IMR-90 (cell line): ENCODE measurements at regions of chr7 and their contacts with region 1.

Region 1: DNA sequence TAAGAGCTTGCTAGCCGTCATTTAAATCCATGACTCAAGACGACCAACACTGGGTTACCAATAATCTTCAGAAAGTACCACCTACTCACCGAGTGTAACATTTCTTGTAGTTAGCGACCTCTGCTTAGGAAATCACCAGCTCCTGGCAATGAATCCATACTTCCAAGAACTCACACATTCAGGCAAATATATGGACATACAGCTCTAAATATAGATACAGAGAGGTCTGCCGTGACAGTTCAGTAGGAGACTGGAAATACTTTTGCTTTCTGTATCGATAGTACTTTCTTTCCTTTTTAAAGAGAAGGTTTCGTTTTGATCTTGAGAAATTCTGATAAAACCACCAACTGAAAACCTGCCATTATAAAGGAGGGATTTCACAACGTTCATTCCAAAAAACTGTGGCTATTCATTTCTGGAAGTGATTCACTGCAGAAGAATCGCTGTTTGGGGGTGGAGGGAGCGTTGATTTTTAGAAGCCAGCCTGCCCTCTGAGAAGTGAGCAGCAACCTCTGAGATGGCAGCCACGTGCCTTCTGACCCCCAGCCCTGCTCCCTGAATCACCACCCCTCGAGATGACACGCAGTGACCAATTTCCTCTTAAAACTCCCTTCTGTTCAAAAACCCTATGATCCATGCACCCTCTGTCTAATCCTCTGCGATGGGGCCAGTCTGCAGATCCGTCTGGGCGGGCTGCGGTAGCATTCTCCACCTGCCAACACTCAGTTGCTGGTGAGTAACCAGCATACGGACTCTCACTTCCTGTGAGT is 179.0 kb upstream of the KLF14 start:
- DNase-seq: peak; percentile 99
- ATAC-seq: peak; percentile 57
- H3K4me3 ChIP-seq: peak overlapping the region; percentile 87
- H3K27ac ChIP-seq: peak overlapping the region; percentile 92
- H3K4me1 ChIP-seq: peaks cover 30% of the 10 kb centered on the region
- H3K27me3 ChIP-seq: no peaks in the 10 kb centered on the region
- CTCF ChIP-seq: no peak
- POLR2A ChIP-seq: peak; percentile 80
- RAD21 ChIP-seq: peak; percentile 15; the same call in 1 of the 2 replicates

Region 2: DNA sequence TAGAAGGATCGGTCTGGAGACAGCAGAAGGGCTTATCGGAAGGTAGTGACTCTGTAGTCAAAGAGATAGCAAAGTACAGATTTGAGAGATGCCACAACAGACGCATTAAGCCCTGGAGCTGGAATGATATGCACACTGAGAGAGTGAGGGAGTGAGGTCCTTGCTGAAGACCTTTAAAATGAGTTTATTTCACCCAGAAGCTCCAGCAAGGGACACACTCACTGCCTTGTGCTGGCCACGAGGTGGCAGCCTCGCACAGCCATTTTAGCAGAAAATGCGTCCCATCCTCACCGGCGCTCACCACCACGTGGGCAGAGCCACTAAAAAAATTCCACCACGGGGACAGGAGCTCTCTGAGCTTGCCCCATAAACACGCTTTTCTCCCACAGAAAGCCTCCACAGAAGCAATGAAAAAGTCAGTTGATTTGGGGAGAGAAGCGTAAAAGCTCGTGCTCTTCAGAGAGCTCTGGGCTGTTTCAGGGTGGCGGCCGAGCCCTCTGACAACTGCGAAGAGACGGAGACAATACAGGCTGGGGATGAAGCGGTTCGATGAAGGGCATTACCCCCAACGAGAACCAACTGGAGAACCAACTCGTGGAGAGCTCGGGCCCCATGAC is 16.0 kb before region 1 on chr7:
- CTCF ChIA-PET with region 1: interaction called, 17 read pairs
- POLR2A ChIA-PET with region 1: interaction called, 3 read pairs
- dilution Hi-C with region 1: no loop called
- in situ Hi-C with region 1: no loop called
- intact Hi-C with region 1: no loop called
- DNase-seq: peak; percentile 84
- ATAC-seq: peak; percentile 24
- H3K4me3 ChIP-seq: no peak overlapping the region
- H3K27ac ChIP-seq: peak overlapping the region; percentile 71
- H3K4me1 ChIP-seq: peaks cover 52% of the 10 kb centered on the region
- H3K27me3 ChIP-seq: no peaks in the 10 kb centered on the region
- CTCF ChIP-seq: peak; percentile 80
- POLR2A ChIP-seq: no peak
- RAD21 ChIP-seq: peak; percentile 83

Region 3: GRCh38 chr7:130943336-130943901 is 30.4 kb after region 1 on chr7:
- CTCF ChIA-PET with region 1: interaction called, 3 read pairs
- POLR2A ChIA-PET with region 1: interaction called, 9 read pairs
- dilution Hi-C with region 1: no loop called
- in situ Hi-C with region 1: no loop called
- intact Hi-C with region 1: loop called (anchors 1 kb)
- DNase-seq: peak; percentile 97
- ATAC-seq: peak; percentile 52
- H3K4me3 ChIP-seq: peak overlapping the region; percentile 45; the same call in 1 of the 2 replicates
- H3K27ac ChIP-seq: peak overlapping the region; percentile 91
- H3K4me1 ChIP-seq: peaks cover 14% of the 10 kb centered on the region
- H3K27me3 ChIP-seq: no peaks in the 10 kb centered on the region
- CTCF ChIP-seq: no peak
- POLR2A ChIP-seq: no peak
- RAD21 ChIP-seq: no peak

Region 4: DNA sequence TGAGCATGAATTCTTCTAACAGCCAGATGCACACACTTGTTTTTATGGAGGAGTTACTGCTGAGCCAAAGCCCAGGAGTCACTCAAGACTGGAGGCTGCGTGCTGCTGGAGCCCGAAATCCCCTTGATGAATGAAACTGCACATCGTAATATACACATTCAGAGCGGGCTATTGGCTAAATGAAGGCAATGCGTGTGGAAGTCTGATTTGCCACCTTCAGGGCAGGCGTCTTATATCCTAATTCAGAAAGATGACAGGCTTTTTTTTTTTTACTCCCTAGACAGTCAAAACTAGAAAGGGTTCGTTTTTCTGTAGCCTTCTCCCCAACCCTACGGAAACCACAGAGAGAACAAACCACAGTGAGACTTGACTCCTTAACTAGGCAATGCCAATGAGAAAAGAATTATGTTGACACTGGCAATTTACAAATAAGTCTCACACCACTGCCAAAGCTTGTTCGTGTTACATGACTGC is 48.1 kb after region 1 on chr7:
- CTCF ChIA-PET with region 1: no interaction called
- POLR2A ChIA-PET with region 1: interaction called, 23 read pairs
- dilution Hi-C with region 1: no loop called
- in situ Hi-C with region 1: no loop called
- intact Hi-C with region 1: loop called (anchors 1 kb)
- DNase-seq: peak; percentile 77
- ATAC-seq: peak; percentile 8
- H3K4me3 ChIP-seq: peak overlapping the region; percentile 30; the same call in 1 of the 2 replicates
- H3K27ac ChIP-seq: peak overlapping the region; percentile 91
- H3K4me1 ChIP-seq: peaks cover 25% of the 10 kb centered on the region
- H3K27me3 ChIP-seq: no peaks in the 10 kb centered on the region
- CTCF ChIP-seq: no peak
- POLR2A ChIP-seq: no peak
- RAD21 ChIP-seq: no peak

Region 5: GRCh38 chr7:131007394-131008330 is 94.6 kb after region 1 on chr7:
- CTCF ChIA-PET with region 1: no interaction called
- POLR2A ChIA-PET with region 1: interaction called, 3 read pairs
- dilution Hi-C with region 1: no loop called
- in situ Hi-C with region 1: no loop called
- intact Hi-C with region 1: loop called (anchors 2 kb)
- DNase-seq: peak; percentile 79
- ATAC-seq: peak; percentile 56
- H3K4me3 ChIP-seq: no peak overlapping the region
- H3K27ac ChIP-seq: peak overlapping the region; percentile 80
- H3K4me1 ChIP-seq: peaks cover 31% of the 10 kb centered on the region
- H3K27me3 ChIP-seq: no peaks in the 10 kb centered on the region
- CTCF ChIP-seq: peak; percentile 74
- POLR2A ChIP-seq: no peak
- RAD21 ChIP-seq: peak; percentile 72

Region 6: GRCh38 chr7:131040467-131040932 is 127.5 kb after region 1 on chr7:
- CTCF ChIA-PET with region 1: no interaction called
- POLR2A ChIA-PET with region 1: no interaction called
- dilution Hi-C with region 1: no loop called
- in situ Hi-C with region 1: no loop called
- intact Hi-C with region 1: loop called (anchors 5 kb)
- DNase-seq: peak; percentile 77
- ATAC-seq: peak; percentile 85
- H3K4me3 ChIP-seq: no peak overlapping the region
- H3K27ac ChIP-seq: no peak overlapping the region
- H3K4me1 ChIP-seq: peaks cover 11% of the 10 kb centered on the region
- H3K27me3 ChIP-seq: no peaks in the 10 kb centered on the region
- CTCF ChIP-seq: peak; percentile 88
- POLR2A ChIP-seq: no peak
- RAD21 ChIP-seq: peak; percentile 91

Region 7: DNA sequence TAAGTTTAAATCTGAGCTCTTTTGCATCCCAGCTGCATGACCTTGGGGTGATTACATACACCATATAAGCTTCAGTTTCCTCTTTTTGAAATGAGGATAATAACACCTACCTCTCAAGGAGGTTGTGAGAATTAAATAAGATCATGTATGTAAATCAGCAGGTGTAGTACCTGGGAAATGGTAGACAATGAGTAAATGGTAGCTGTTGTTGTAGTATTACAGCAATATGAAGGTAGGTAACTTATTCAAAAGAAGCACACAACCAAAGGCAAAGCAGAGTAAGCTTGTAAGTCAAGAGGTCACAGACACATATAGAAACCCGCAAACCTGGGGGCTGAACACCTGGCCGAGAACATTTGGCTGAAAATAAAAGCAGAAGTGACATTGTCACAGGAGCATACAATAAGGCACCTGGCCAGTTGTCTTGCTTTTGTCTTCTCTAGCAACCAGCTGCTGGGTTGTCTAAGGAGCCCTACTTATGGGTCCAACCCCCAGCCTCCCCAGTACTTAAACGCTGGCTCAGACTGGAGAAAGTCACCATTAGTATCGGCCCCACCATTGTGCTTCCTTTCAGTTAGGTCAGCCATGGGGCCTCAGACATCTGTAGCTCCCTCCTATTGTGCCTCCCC is 211.1 kb after region 1 on chr7:
- CTCF ChIA-PET with region 1: no interaction called
- POLR2A ChIA-PET with region 1: no interaction called
- dilution Hi-C with region 1: no loop called
- in situ Hi-C with region 1: no loop called
- intact Hi-C with region 1: no loop called
- DNase-seq: no peak
- ATAC-seq: no peak
- H3K4me3 ChIP-seq: no peak overlapping the region
- H3K27ac ChIP-seq: no peak overlapping the region
- H3K4me1 ChIP-seq: no peaks in the 10 kb centered on the region
- H3K27me3 ChIP-seq: peaks cover 5% of the 10 kb centered on the region
- CTCF ChIP-seq: no peak
- POLR2A ChIP-seq: no peak
- RAD21 ChIP-seq: no peak